Heart right ventricle (tissue), 16 donors: ENCODE measurements at regions of chr7 and their contacts with region 1.

Region 1: DNA sequence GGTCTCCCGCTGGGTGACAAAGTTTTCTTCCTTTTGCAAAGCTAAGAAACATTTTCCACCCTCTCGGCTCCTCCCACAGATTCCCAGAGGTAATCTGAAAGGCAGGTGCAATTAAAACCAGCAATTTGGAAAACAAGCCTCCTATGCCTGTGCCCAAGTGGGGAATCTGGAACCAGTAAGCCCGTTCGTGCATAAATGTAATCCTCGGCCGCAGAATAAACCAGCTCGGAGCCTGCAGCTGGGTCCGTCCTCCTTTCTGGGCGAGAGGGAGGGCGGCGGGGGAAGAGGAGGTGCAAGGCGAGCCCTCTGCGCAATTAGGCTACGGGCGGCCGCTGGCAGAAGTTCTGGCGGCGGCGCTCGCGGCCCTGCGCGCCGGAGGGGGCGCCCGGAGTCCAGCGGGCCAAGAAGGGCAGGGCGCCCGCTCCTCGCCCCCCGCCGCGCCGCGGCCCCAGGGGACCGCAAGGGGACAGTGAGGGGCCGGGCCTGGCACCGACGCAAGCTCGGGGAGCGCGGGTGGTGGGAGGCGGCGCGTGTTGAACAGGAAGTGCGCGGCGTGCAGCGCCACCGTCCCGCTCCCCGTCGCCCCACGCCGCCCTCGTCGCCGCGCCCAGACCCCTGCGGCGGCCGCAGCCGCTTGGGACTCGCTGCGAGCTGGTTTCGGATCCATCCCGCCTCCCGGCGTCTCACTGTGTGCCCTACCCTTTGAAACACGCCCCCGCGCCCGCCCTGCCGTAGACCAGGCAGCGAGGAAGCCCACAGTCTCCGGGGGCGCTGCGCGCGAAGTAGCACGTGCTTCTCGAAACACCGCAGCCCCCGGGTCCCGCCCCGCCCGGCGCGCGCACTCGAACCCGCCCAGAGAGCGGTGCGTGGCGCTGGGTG is at the start of gene PRKAG2:
- DNase-seq: peak; percentile 59 to 73
- ATAC-seq: peak; percentile 36 to 62 (median 52)
- H3K4me3 ChIP-seq: peak within 1 kb of the TSS; percentile 33 to 95 (median 80)
- H3K27ac ChIP-seq: peak within 1 kb of the TSS; percentile 80 to 97 (median 95)
- H3K4me1 ChIP-seq: peaks cover 0 to 34% (median 21%) of the 10 kb centered on the region in 9 donors
- H3K27me3 ChIP-seq: peaks cover 0 to 10% (median 8%) of the 10 kb centered on the region in 7 donors
- CTCF ChIP-seq: peak in 3 of 9 donors; percentile 19 to 27 (median 23)
- total RNA-seq, gene PRKAG2: 101 to 156 (median 121) TPM

Region 2: GRCh38 chr7:151925446-151926335 is 48.6 kb after region 1 on chr7:
- intact Hi-C with region 1: loop called in 3 of 10 experiments (anchors 5 kb)
- DNase-seq: peak; percentile 33 to 63
- ATAC-seq: peak; percentile 41 to 81 (median 64)
- H3K4me3 ChIP-seq: peak overlapping the region in 1 of 10 donors; percentile 27
- H3K27ac ChIP-seq: peak overlapping the region in 9 of 10 donors; percentile 29 to 93 (median 40)
- H3K4me1 ChIP-seq: peaks cover 0 to 52% (median 4%) of the 10 kb centered on the region in 9 donors
- H3K27me3 ChIP-seq: no peaks in the 10 kb centered on the region
- CTCF ChIP-seq: no peak

Region 3: GRCh38 chr7:151932358-151932876 is 55.3 kb after region 1 on chr7:
- intact Hi-C with region 1: loop called in 3 of 10 experiments (anchors 5 kb)
- DNase-seq: no peak
- ATAC-seq: peak in 7 of 8 donors; percentile 54 to 75 (median 65)
- H3K4me3 ChIP-seq: no peak overlapping the region
- H3K27ac ChIP-seq: peak overlapping the region in 1 of 10 donors; percentile 72
- H3K4me1 ChIP-seq: peaks cover 0 to 35% (median 0%) of the 10 kb centered on the region in 9 donors
- H3K27me3 ChIP-seq: peaks cover 0 to 8% (median 0%) of the 10 kb centered on the region in 7 donors
- CTCF ChIP-seq: no peak

Region 4: GRCh38 chr7:152025077-152025936 is 148.2 kb after region 1 on chr7 and contains the start of gene GALNT11:
- intact Hi-C with region 1: loop called in 1 of 10 experiments (anchors 5 kb)
- DNase-seq: peak; percentile 79 to 89
- ATAC-seq: peak; percentile 96 to 100 (median 98)
- H3K4me3 ChIP-seq: peak within 1 kb of the TSS; percentile 64 to 96 (median 86)
- H3K27ac ChIP-seq: peak within 1 kb of the TSS in 9 of 10 donors; percentile 82 to 94 (median 87)
- H3K4me1 ChIP-seq: peaks cover 0 to 23% (median 13%) of the 10 kb centered on the region in 9 donors
- H3K27me3 ChIP-seq: no peaks in the 10 kb centered on the region
- CTCF ChIP-seq: peak in 5 of 9 donors; percentile 25 to 58 (median 40)
- total RNA-seq, gene GALNT11: 19.3 to 28.4 (median 22.9) TPM